ENCODE measurements at regions of chr19 and their contacts with region 1.

Region 1: DNA sequence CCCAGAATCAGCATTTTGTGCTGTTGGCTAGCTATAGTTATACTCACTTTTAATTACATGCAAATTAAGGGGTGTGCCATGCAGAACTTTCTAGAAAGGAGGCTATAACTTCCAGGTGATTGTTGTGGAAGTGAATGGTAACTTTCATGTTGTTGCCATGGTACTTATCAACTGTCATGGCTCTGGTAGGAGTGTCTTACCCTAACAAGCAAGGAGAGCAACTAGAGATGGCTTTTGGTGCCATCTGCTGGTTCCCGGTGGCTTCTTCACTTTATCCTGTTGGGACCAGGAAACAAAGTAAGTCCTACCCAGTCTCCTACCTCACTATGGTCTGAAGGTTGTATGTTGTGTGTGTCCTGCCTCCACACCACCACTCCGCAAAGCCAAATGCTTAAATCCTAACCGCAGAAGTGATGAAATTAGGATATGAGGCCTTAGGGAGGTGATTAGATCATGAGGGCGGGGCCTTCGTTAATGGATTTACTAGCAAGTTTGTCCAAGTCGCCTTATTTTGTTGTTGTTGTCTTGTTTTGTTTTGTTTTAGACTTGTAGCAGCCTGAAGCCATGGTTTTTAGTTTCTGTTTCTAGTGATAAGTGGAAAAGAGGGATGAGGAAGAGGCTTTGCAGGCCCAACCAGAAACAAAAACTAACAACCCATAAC is 22.6 kb downstream of the FBXL12 start:
- DNase-seq: peak; percentile 81
- H3K4me3 ChIP-seq: no peak overlapping the region
- H3K27ac ChIP-seq: peak overlapping the region in 1 of 2 donors; percentile 29
- H3K4me1 ChIP-seq: no peaks in the 10 kb centered on the region
- H3K27me3 ChIP-seq: no peaks in the 10 kb centered on the region
- CTCF ChIP-seq: peak; percentile 44 to 89 (median 82)
- POLR2A ChIP-seq: no peak

Region 2: DNA sequence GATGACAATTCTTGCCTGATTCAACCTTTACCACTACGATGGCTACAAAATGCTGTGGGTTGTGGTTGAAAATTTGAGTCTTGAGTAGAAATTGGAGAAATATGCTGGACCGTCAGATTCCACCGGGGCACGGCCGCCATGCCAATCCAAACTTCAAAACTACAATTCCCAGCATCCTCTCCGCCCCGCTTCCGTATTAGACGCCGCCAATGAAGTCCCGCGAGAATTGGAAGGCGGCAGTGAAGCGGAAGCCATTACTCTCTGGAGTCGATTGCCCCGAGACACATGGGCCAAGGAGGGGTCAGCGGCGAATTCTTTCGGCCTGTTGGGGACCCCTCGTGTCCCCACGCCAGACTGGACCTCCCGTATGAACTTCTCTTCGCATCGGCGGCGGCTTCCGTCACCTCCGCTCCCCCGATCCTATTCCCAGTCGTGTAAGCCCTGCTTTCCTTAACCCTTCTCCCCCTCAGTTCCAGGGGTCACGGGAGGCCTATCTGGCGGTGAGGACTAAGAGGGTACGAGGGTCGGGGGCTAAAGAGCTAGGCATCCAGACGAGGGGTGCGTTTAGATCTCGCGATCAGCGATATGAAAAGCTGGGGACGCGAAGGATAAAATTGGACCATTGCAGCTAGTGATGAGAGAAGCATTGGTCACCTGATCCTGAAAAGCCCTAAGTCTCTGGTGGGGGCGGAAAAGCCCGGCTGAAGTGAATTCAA is 655.9 kb before region 1 on chr19 and contains the start of gene ZNF317:
- intact Hi-C with region 1: loop called (anchors 10 kb)
- DNase-seq: peak; percentile 92
- H3K4me3 ChIP-seq: peak within 1 kb of the TSS; percentile 57 to 66
- H3K27ac ChIP-seq: peak within 1 kb of the TSS; percentile 71 to 84
- H3K4me1 ChIP-seq: no peaks in the 10 kb centered on the region
- H3K27me3 ChIP-seq: no peaks in the 10 kb centered on the region
- CTCF ChIP-seq: no peak
- POLR2A ChIP-seq: peak; percentile 56
- total RNA-seq, gene ZNF317: 18.3 to 22.9 TPM

Region 3: DNA sequence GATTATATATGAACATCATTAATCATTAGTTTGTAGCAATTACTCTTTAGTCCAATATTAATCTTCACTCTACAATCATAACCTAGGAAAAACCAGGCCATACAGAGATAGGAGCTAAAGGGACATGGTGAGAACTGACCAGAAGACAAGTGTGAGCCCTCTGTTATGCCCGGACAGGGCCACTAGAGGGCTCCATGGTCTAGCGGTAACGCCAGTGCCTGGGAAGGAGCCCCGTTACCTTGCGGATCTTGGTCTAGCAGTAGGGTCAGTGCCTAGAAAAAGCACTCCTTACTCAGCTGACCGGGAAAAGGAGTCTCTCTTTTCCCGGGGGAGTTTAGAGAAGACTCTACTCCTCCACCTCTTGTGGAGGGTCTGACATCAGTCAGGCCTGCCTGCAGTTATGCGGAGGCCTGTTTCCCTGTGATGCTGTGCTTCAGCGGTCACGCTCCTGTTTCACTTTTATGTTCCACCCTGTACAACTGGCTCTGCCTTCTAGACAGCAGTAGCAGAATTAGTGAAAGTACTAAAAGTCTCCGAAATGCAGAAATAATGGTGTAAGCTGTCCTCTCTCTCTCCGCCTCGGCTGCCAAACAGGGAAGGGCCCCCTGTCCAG is 590.6 kb before region 1 on chr19:
- intact Hi-C with region 1: loop called (anchors 2 kb)
- DNase-seq: peak; percentile 58
- H3K4me3 ChIP-seq: no peak overlapping the region
- H3K27ac ChIP-seq: no peak overlapping the region
- H3K4me1 ChIP-seq: no peaks in the 10 kb centered on the region
- H3K27me3 ChIP-seq: no peaks in the 10 kb centered on the region
- CTCF ChIP-seq: peak; percentile 55 to 79 (median 68)
- POLR2A ChIP-seq: no peak

Region 4: GRCh38 chr19:9323919-9324583 is 472.2 kb before region 1 on chr19 and contains the start of gene ZNF559:
- intact Hi-C with region 1: loop called (anchors 5 kb)
- DNase-seq: peak; percentile 89
- H3K4me3 ChIP-seq: peak within 1 kb of the TSS; percentile 71 to 81
- H3K27ac ChIP-seq: peak within 1 kb of the TSS; percentile 78 to 85
- H3K4me1 ChIP-seq: no peaks in the 10 kb centered on the region
- H3K27me3 ChIP-seq: no peaks in the 10 kb centered on the region
- CTCF ChIP-seq: peak in 2 of 4 experiments; percentile 44 to 50
- POLR2A ChIP-seq: peak; percentile 43
- total RNA-seq, gene ZNF559: 19.4 to 30.3 TPM

Region 5: GRCh38 chr19:9435279-9436268 is 360.7 kb before region 1 on chr19 and contains the start of gene ZNF266:
- intact Hi-C with region 1: loop called (anchors 10 kb)
- DNase-seq: peak; percentile 79
- H3K4me3 ChIP-seq: peak within 1 kb of the TSS; percentile 71 to 87
- H3K27ac ChIP-seq: peak within 1 kb of the TSS; percentile 87 to 89
- H3K4me1 ChIP-seq: peaks cover 3% of the 10 kb centered on the region
- H3K27me3 ChIP-seq: no peaks in the 10 kb centered on the region
- CTCF ChIP-seq: peak; percentile 71 to 90 (median 82)
- POLR2A ChIP-seq: peak; percentile 26
- total RNA-seq, gene ZNF266: 20.4 to 22.9 TPM

Region 6: DNA sequence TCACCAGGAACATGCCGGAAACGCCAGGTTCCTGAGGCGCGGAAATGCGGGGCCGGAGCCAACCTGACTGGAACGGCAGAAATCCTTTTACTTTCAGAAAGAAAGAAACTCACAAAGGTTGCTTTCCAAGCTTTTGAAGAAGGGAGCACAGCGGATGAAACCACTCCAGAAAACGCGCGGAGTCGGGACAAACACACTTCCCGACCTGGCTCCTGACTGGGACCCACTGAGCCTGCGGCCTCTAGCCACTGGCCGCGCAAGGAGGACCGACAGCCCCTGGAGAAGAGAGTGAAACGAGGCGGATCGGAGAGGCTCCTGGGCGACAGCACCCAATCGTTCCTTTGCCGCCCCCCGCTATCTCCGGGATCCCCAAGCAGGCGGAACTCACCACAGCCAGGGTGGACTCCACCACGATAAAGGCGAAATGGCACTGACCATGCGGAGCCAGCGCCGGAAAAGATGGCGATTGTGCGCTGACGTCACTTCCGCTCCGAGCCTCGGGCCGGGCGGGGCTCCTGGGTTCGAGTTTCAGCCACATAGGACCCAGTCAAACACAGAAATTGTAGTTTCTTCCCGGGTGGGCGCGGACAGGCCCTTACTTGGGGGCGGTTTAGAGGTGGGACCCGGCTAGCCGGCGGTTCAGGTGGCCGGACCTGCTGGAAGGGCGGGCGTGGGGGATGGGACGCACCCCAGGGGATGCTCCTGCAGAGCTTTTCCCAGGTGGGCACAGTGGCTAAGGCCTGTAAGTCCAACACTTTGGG is 212.0 kb before region 1 on chr19 and contains the start of gene ZNF121:
- intact Hi-C with region 1: loop called (anchors 2 kb)
- DNase-seq: peak; percentile 76
- H3K4me3 ChIP-seq: peak within 1 kb of the TSS; percentile 74 to 83
- H3K27ac ChIP-seq: peak within 1 kb of the TSS; percentile 94 to 97
- H3K4me1 ChIP-seq: no peaks in the 10 kb centered on the region
- H3K27me3 ChIP-seq: no peaks in the 10 kb centered on the region
- CTCF ChIP-seq: peak in 1 of 4 experiments; percentile 24
- POLR2A ChIP-seq: peak; percentile 55
- total RNA-seq, gene ZNF121: 31.6 to 31.7 TPM

Region 7: GRCh38 chr19:9818734-9819589 is 22.7 kb after region 1 on chr19 and contains the start of gene FBXL12:
- intact Hi-C with region 1: loop called (anchors 2 kb)
- DNase-seq: peak; percentile 100
- H3K4me3 ChIP-seq: peak within 1 kb of the TSS; percentile 58 to 97
- H3K27ac ChIP-seq: peak within 1 kb of the TSS; percentile 92 to 98
- H3K4me1 ChIP-seq: peaks cover 7% of the 10 kb centered on the region
- H3K27me3 ChIP-seq: no peaks in the 10 kb centered on the region
- CTCF ChIP-seq: peak in 1 of 4 experiments; percentile 6
- POLR2A ChIP-seq: peak; percentile 91
- total RNA-seq, gene FBXL12: 17.6 to 50.6 TPM